PC-3 (cell line): ENCODE measurements at regions of chr5 and their contacts with region 1.

Region 1: GRCh38 chr5:80093796-80094195 is 58.6 kb downstream of the THBS4 start:
- DNase-seq: no peak
- ATAC-seq: no peak
- H3K4me3 ChIP-seq: no peak overlapping the region
- H3K27ac ChIP-seq: no peak overlapping the region
- H3K4me1 ChIP-seq: no peaks in the 10 kb centered on the region
- H3K27me3 ChIP-seq: no peaks in the 10 kb centered on the region
- CTCF ChIP-seq: no peak

Region 2: GRCh38 chr5:79582186-79582585 is 511.6 kb before region 1 on chr5:
- CTCF ChIA-PET with region 1: no interaction called
- POLR2A ChIA-PET with region 1: no interaction called
- intact Hi-C with region 1: no loop called
- DNase-seq: no peak
- ATAC-seq: no peak
- H3K4me3 ChIP-seq: no peak overlapping the region
- H3K27ac ChIP-seq: no peak overlapping the region
- H3K4me1 ChIP-seq: peaks cover 9% of the 10 kb centered on the region
- H3K27me3 ChIP-seq: no peaks in the 10 kb centered on the region
- CTCF ChIP-seq: no peak

Region 3: DNA sequence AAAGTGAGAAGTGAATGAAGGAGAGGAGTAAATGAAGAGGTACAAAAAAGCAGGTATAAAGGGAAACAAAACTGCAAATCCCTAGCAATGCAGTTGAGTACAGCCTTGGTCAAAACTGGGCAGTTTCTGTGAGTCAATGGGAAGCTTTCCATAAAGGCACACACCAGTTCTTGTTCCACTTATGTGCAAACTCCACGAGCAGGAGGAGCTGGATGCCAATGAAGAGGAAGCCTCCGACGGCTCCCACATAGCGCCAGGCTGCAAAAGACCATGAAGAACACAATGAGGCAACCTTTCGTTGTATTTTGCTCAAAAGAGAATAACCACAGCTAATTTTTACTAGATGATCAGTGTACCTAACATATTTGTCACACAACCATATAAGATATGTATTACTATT is 81.0 kb after region 1 on chr5:
- CTCF ChIA-PET with region 1: no interaction called
- POLR2A ChIA-PET with region 1: no interaction called
- intact Hi-C with region 1: loop called (anchors 5 kb)
- DNase-seq: no peak
- ATAC-seq: no peak
- H3K4me3 ChIP-seq: no peak overlapping the region
- H3K27ac ChIP-seq: no peak overlapping the region
- H3K4me1 ChIP-seq: no peaks in the 10 kb centered on the region
- H3K27me3 ChIP-seq: no peaks in the 10 kb centered on the region
- CTCF ChIP-seq: no peak

Region 4: GRCh38 chr5:80275347-80275746 is 181.6 kb after region 1 on chr5:
- CTCF ChIA-PET with region 1: no interaction called
- POLR2A ChIA-PET with region 1: interaction called, 3 read pairs
- intact Hi-C with region 1: loop called (anchors 1 kb)
- DNase-seq: peak; percentile 28
- ATAC-seq: no peak; the same call in 1 of the 2 replicates
- H3K4me3 ChIP-seq: no peak overlapping the region
- H3K27ac ChIP-seq: no peak overlapping the region
- H3K4me1 ChIP-seq: no peaks in the 10 kb centered on the region
- H3K27me3 ChIP-seq: no peaks in the 10 kb centered on the region
- CTCF ChIP-seq: peak; percentile 61

Region 5: DNA sequence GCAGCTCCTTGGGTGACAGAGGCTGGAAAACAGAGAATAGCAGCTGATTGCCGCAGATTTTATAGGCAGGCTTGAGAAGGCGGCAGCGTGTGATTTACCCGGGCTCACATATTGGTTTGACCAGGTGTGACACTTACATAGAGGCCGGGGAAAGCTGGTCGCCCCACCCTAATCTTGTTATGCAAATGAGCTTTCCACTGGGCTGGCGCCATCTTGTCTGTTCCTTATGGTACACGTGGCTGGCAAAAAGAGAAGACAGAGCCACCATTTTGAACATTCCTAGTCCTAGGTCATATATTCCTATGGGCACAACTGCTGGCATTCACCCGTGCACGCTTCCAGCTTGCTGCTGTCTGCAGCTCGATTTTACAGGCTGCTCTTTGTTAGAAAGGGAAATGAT is 214.7 kb after region 1 on chr5:
- CTCF ChIA-PET with region 1: interaction called, 40 read pairs
- POLR2A ChIA-PET with region 1: no interaction called
- intact Hi-C with region 1: loop called (anchors 1 kb)
- DNase-seq: no peak
- ATAC-seq: no peak
- H3K4me3 ChIP-seq: no peak overlapping the region
- H3K27ac ChIP-seq: no peak overlapping the region
- H3K4me1 ChIP-seq: no peaks in the 10 kb centered on the region
- H3K27me3 ChIP-seq: no peaks in the 10 kb centered on the region
- CTCF ChIP-seq: no peak